ENCODE measurements at regions of chr12 and their contacts with region 1.

Region 1: GRCh38 chr12:31682136-31682962 is 22.9 kb downstream of the ETFBKMT start:
- DNase-seq: peak; percentile 78
- CTCF ChIP-seq: peak; percentile 66

Region 2: DNA sequence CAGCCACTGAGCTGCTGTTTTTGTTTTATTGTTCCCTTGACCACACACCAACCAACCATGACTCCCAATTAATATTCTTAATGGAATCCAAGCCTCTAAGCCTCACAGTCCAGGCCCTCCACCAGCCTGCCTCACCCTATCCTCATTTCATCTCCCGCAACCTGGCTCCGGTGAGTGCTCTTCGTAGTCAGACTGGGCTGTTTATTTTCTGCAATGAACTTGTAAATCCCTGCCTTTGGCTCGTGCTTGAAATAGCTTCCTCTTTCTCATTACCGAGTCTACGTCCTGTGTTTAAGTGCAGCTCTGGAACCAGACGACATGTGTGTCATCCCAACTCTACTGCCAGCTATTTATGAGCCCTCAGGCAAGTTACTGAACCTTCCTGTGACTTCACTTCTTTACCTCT is 35.3 kb before region 1 on chr12:
- CTCF ChIA-PET with region 1: interaction called, 13 read pairs
- POLR2A ChIA-PET with region 1: no interaction called
- DNase-seq: no peak
- CTCF ChIP-seq: no peak

Region 3: GRCh38 chr12:32139064-32139421 is 456.7 kb after region 1 on chr12:
- CTCF ChIA-PET with region 1: no interaction called
- POLR2A ChIA-PET with region 1: no interaction called
- DNase-seq: peak; percentile 78
- CTCF ChIP-seq: no peak